ENCODE measurements at regions of chr6 and their contacts with region 1.

Region 1: DNA sequence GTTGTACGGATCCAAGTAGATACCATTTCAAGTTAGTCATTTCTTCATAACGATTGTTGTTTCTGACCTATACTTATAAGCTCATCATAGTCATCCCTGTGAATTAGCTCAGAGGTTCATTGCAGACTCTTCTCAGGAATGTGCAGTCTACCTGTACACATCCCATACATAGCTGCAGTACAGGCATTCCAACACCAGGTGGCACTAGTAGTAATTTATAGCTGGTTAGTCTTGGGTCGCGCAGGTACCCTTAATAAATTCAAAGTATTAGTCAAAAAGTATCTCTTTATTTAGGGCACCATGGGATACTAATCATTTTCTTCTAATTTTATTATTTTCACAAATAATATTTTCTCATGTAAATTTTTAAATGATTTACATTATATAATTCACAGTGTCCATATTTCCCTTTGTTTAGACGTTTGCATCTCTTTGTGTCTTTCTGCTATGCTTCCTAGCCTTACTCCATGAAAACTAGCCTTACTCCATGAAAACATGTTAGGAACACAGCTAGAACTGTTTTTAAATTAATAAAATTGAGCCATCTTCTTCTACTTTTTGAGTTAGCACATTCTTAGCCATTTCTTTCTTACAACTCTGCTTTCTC is 128.6 kb upstream of the FAM83B start:
- DNase-seq: peak; percentile 20
- ATAC-seq: peak; percentile 93
- H3K4me3 ChIP-seq: no peak overlapping the region
- H3K27ac ChIP-seq: no peak overlapping the region
- H3K4me1 ChIP-seq: no peaks in the 10 kb centered on the region
- H3K27me3 ChIP-seq: no peaks in the 10 kb centered on the region
- CTCF ChIP-seq: peak; percentile 71 to 83 (median 77)
- EP300 ChIP-seq: no peak
- POLR2A ChIP-seq: no peak
- RAD21 ChIP-seq: peak; percentile 71

Region 2: DNA sequence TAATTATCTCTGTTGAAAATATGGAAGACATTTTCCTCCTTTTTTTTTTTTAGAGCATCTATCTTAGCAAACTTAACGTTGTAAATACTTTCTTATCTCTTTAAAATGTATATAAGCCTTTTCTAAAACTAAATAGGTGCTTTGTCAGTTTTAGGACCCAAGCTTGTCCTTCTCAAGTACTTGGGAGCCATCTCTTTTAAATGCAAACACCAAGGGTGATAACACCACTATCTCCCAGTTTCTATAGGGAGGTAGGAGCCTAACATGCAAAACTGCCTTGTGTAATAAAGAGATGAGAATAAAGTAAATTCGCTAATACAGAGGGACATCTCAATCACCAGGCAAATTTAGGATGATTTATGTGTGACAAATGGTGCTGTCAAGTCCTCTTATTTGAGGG is 28.3 kb before region 1 on chr6:
- CTCF ChIA-PET with region 1: interaction called, 183 read pairs
- POLR2A ChIA-PET with region 1: no interaction called
- RAD21 ChIA-PET with region 1: no interaction called
- SMC1A ChIA-PET with region 1: interaction called, 15 read pairs
- in situ Hi-C with region 1: no loop called
- intact Hi-C with region 1: no loop called
- DNase-seq: no peak
- ATAC-seq: no peak
- H3K4me3 ChIP-seq: no peak overlapping the region
- H3K27ac ChIP-seq: no peak overlapping the region
- H3K4me1 ChIP-seq: no peaks in the 10 kb centered on the region
- H3K27me3 ChIP-seq: no peaks in the 10 kb centered on the region
- CTCF ChIP-seq: no peak
- EP300 ChIP-seq: no peak
- POLR2A ChIP-seq: no peak
- RAD21 ChIP-seq: no peak

Region 3: GRCh38 chr6:54706844-54707605 is 10.9 kb before region 1 on chr6:
- CTCF ChIA-PET with region 1: interaction called, 183 read pairs
- POLR2A ChIA-PET with region 1: no interaction called
- RAD21 ChIA-PET with region 1: interaction called, 4 read pairs
- SMC1A ChIA-PET with region 1: interaction called, 23 read pairs
- in situ Hi-C with region 1: no loop called
- intact Hi-C with region 1: no loop called
- DNase-seq: no peak
- ATAC-seq: no peak
- H3K4me3 ChIP-seq: no peak overlapping the region
- H3K27ac ChIP-seq: no peak overlapping the region
- H3K4me1 ChIP-seq: no peaks in the 10 kb centered on the region
- H3K27me3 ChIP-seq: no peaks in the 10 kb centered on the region
- CTCF ChIP-seq: no peak
- EP300 ChIP-seq: no peak
- POLR2A ChIP-seq: no peak
- RAD21 ChIP-seq: no peak

Region 4: DNA sequence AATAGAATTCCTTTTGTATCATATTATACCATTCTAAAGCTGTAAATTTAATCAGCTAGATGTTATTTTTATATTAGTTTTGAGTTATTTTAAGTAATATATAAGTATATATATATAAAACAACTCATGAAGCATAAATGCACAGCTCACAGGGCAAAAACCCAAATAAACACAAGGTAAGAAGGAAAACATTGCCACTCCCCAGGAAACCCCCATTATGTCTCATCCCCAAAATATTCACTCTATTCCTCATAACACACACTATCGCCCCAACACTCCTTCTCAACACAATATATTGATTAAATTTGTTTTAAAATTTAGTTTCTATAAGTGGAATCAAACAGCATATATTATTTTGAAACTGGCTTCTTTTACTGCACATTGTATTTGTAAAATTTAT is 30.0 kb after region 1 on chr6:
- CTCF ChIA-PET with region 1: interaction called, 17 read pairs
- POLR2A ChIA-PET with region 1: no interaction called
- RAD21 ChIA-PET with region 1: no interaction called
- SMC1A ChIA-PET with region 1: interaction called, 3 read pairs
- in situ Hi-C with region 1: no loop called
- intact Hi-C with region 1: no loop called
- DNase-seq: no peak
- ATAC-seq: no peak
- H3K4me3 ChIP-seq: no peak overlapping the region
- H3K27ac ChIP-seq: no peak overlapping the region
- H3K4me1 ChIP-seq: no peaks in the 10 kb centered on the region
- H3K27me3 ChIP-seq: no peaks in the 10 kb centered on the region
- CTCF ChIP-seq: no peak
- EP300 ChIP-seq: no peak
- POLR2A ChIP-seq: no peak
- RAD21 ChIP-seq: no peak

Region 5: DNA sequence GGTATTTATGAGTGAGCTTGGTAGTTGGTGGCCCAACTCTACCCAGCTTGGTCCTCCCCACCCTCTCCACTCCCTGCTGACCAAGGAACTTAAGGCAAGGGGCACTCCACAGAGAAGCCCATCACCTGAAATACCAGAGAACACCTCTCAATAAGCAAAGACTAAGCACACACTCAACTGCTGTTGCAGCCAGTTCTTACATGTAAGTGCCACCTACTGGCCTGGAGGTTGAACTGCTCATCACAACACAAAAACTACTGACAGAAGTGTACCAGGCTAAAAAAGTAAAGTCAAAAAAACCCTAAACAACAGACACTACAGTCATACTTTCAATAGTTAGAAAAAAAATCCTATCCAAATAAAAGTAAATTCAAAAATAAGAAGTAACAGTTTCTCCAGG is 274.8 kb after region 1 on chr6:
- CTCF ChIA-PET with region 1: interaction called, 48 read pairs
- POLR2A ChIA-PET with region 1: no interaction called
- RAD21 ChIA-PET with region 1: interaction called, 5 read pairs
- SMC1A ChIA-PET with region 1: interaction called, 27 read pairs
- in situ Hi-C with region 1: no loop called
- intact Hi-C with region 1: loop called (anchors 1 kb)
- DNase-seq: no peak
- ATAC-seq: peak; percentile 80
- H3K4me3 ChIP-seq: no peak overlapping the region
- H3K27ac ChIP-seq: no peak overlapping the region
- H3K4me1 ChIP-seq: no peaks in the 10 kb centered on the region
- H3K27me3 ChIP-seq: no peaks in the 10 kb centered on the region
- CTCF ChIP-seq: peak; percentile 42 to 65 (median 51); a peak in 5 of 6 replicates
- EP300 ChIP-seq: no peak
- POLR2A ChIP-seq: no peak
- RAD21 ChIP-seq: peak; percentile 74

Region 6: GRCh38 chr6:55239099-55239498 is 521.1 kb after region 1 on chr6:
- CTCF ChIA-PET with region 1: interaction called, 5 read pairs
- POLR2A ChIA-PET with region 1: no interaction called
- RAD21 ChIA-PET with region 1: no interaction called
- SMC1A ChIA-PET with region 1: interaction called, 4 read pairs
- in situ Hi-C with region 1: no loop called
- intact Hi-C with region 1: loop called (anchors 5 kb)
- DNase-seq: no peak
- ATAC-seq: no peak
- H3K4me3 ChIP-seq: no peak overlapping the region
- H3K27ac ChIP-seq: no peak overlapping the region
- H3K4me1 ChIP-seq: no peaks in the 10 kb centered on the region
- H3K27me3 ChIP-seq: no peaks in the 10 kb centered on the region
- CTCF ChIP-seq: no peak
- EP300 ChIP-seq: no peak
- POLR2A ChIP-seq: no peak
- RAD21 ChIP-seq: no peak